A673 (cell line): ENCODE measurements at regions of chr10 and their contacts with region 1.

Region 1: DNA sequence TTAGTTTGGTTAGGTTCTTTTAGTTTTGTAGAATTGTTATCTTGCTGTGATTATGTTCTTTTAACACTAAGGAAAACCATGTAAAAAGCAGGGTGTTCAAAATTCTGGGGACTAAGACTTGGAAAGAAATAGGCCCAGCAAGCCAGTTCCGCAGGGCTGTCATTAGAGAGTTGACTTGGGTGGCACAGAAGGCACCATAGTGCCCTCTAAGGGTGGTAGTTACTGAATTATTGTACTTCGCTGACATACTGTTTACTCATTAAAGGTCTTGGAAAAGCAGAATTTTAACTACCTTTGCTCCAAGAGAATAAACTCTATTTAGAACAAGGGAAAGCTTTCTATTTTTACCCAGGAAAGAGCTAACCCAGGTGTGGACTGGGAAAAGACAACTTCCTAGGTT is 86.5 kb downstream of the OTUD1 start:
- DNase-seq: peak; percentile 58
- H3K4me3 ChIP-seq: no peak overlapping the region
- H3K27ac ChIP-seq: no peak overlapping the region
- H3K4me1 ChIP-seq: peaks cover 16% of the 10 kb centered on the region
- H3K27me3 ChIP-seq: no peaks in the 10 kb centered on the region
- CTCF ChIP-seq: peak; percentile 64

Region 2: DNA sequence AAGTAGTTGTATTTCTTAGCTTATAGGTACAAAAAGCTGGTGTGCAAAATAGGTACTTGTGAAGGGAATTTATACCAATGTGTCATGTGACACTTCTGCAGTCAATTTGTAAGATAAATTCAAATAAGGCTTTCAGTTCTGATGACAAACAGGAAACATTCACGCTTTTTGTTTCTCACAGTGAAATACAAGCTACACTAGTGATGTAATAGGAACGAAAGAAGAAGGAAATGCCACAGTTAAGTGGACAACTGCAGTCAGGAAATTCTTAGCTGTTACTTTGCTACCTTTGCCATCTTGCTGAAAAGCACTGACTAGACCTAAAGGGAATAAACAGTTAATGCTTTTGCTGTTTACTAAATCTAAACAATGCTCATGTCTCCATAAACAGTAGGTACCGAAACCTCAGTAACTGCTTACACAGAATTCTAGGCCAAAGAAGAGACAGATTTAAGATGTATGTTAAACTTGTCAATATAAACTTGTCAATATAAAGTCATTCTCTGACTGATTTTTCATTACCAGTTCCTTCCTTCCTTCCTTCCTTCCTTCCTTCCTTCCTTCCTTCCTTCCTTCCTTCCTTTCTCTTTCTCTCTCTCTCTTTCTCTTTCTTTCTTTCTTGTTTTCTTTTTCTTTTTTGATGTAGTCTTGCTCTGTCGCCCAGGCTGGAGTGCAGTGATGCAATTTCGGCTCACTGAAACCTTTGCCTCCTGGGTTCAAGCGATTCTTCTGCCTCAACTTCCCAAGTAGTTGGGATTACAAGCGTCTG is 76.4 kb before region 1 on chr10:
- CTCF ChIA-PET with region 1: interaction called, 3 read pairs
- POLR2A ChIA-PET with region 1: no interaction called
- intact Hi-C with region 1: loop called (anchors 5 kb)
- DNase-seq: peak; percentile 90
- H3K4me3 ChIP-seq: no peak overlapping the region
- H3K27ac ChIP-seq: peak overlapping the region; percentile 95
- H3K4me1 ChIP-seq: peaks cover 32% of the 10 kb centered on the region
- H3K27me3 ChIP-seq: no peaks in the 10 kb centered on the region
- CTCF ChIP-seq: no peak

Region 3: DNA sequence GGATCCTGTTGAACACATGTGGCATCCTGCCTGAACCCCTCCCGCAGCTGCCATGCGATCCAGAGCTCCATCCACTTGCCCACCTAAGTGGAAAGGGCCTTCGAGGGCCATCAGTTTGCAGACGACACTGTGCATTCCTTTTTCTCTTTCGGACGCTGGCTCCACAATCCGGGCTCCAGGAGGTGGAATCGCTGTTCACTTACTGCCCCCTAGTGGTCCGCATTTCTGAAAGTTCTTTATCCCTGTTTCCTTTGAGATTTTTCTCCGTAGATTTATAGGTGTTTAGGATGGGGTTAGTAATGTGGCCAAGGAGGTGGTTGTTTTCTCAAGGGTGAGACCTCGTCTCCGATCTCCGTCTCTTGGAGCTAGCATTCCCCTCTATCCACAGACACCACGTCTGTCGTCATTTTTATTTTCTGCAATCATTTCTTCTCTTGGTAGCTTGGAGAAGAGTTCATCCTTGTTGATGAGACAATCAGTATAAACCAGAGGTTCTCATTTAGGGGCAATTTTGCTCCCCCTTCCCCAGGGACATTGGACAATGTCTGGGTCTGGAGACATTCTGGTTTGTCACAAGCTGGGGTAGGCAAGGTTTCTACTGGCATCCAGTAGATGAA is 993.7 kb after region 1 on chr10:
- CTCF ChIA-PET with region 1: no interaction called
- POLR2A ChIA-PET with region 1: no interaction called
- intact Hi-C with region 1: loop called (anchors 10 kb)
- DNase-seq: peak; percentile 88
- H3K4me3 ChIP-seq: no peak overlapping the region
- H3K27ac ChIP-seq: peak overlapping the region; percentile 71
- H3K4me1 ChIP-seq: peaks cover 41% of the 10 kb centered on the region
- H3K27me3 ChIP-seq: no peaks in the 10 kb centered on the region
- CTCF ChIP-seq: peak; percentile 90